GM10248 (cell line): ENCODE measurements at regions of chr15 and their contacts with region 1.

Region 1: GRCh38 chr15:43762824-43763223 is 13.9 kb downstream of the ELL3 start:
- DNase-seq: no peak
- CTCF ChIP-seq: no peak

Region 2: GRCh38 chr15:43749690-43750345 is 13.0 kb before region 1 on chr15:
- CTCF ChIA-PET with region 1: interaction called, 22 read pairs
- POLR2A ChIA-PET with region 1: interaction called, 4 read pairs
- DNase-seq: peak; percentile 68
- CTCF ChIP-seq: no peak